ENCODE measurements at regions of chr18 and their contacts with region 1.

Region 1: GRCh38 chr18:45664824-45665763 is 49.8 kb downstream of the SLC14A2 start:
- H3K4me3 Mint-ChIP-seq: no peak overlapping the region
- H3K27ac Mint-ChIP-seq: no peak overlapping the region
- H3K4me1 Mint-ChIP-seq: peaks cover 40% of the 10 kb centered on the region
- H3K27me3 Mint-ChIP-seq: no peaks in the 10 kb centered on the region

Region 2: GRCh38 chr18:45312555-45313126 is 352.5 kb before region 1 on chr18:
- intact Hi-C with region 1: no loop called
- H3K4me3 Mint-ChIP-seq: no peak overlapping the region
- H3K27ac Mint-ChIP-seq: no peak overlapping the region
- H3K4me1 Mint-ChIP-seq: no peaks in the 10 kb centered on the region
- H3K27me3 Mint-ChIP-seq: no peaks in the 10 kb centered on the region

Region 3: GRCh38 chr18:45482286-45482685 is 182.8 kb before region 1 on chr18:
- intact Hi-C with region 1: no loop called
- H3K4me3 Mint-ChIP-seq: no peak overlapping the region
- H3K27ac Mint-ChIP-seq: no peak overlapping the region
- H3K4me1 Mint-ChIP-seq: no peaks in the 10 kb centered on the region
- H3K27me3 Mint-ChIP-seq: no peaks in the 10 kb centered on the region

Region 4: DNA sequence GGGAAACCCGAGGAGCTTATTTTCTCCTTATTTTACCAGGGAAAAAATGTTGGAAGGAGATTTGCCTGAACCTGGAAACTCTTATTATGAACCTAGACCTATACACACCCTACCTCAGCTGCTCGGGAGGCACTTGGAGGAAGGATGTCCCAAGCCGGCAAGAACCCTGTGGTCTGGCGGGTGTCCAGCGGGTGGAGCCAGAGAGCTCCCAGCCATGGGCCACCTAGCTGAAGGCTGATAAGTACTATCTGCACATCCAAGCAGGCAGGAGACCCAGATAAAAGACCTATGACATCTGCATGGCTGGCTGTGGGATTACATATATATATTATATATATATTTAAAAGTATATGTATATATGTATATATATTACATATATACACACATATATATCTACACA is 57.8 kb after region 1 on chr18:
- intact Hi-C with region 1: loop called (anchors 2 kb)
- H3K4me3 Mint-ChIP-seq: no peak overlapping the region
- H3K27ac Mint-ChIP-seq: no peak overlapping the region
- H3K4me1 Mint-ChIP-seq: no peaks in the 10 kb centered on the region
- H3K27me3 Mint-ChIP-seq: peaks cover 1% of the 10 kb centered on the region

Region 5: GRCh38 chr18:45879681-45880655 is 214.9 kb after region 1 on chr18:
- intact Hi-C with region 1: loop called (anchors 1 kb)
- H3K4me3 Mint-ChIP-seq: no peak overlapping the region
- H3K27ac Mint-ChIP-seq: no peak overlapping the region
- H3K4me1 Mint-ChIP-seq: peaks cover 7% of the 10 kb centered on the region
- H3K27me3 Mint-ChIP-seq: no peaks in the 10 kb centered on the region

Region 6: GRCh38 chr18:45974088-45974536 is 309.0 kb after region 1 on chr18:
- intact Hi-C with region 1: loop called (anchors 5 kb)
- H3K4me3 Mint-ChIP-seq: no peak overlapping the region
- H3K27ac Mint-ChIP-seq: no peak overlapping the region
- H3K4me1 Mint-ChIP-seq: no peaks in the 10 kb centered on the region
- H3K27me3 Mint-ChIP-seq: no peaks in the 10 kb centered on the region